Endothelial cell of umbilical vein (primary cell): ENCODE measurements at regions of chr10 and their contacts with region 1.

Region 1: DNA sequence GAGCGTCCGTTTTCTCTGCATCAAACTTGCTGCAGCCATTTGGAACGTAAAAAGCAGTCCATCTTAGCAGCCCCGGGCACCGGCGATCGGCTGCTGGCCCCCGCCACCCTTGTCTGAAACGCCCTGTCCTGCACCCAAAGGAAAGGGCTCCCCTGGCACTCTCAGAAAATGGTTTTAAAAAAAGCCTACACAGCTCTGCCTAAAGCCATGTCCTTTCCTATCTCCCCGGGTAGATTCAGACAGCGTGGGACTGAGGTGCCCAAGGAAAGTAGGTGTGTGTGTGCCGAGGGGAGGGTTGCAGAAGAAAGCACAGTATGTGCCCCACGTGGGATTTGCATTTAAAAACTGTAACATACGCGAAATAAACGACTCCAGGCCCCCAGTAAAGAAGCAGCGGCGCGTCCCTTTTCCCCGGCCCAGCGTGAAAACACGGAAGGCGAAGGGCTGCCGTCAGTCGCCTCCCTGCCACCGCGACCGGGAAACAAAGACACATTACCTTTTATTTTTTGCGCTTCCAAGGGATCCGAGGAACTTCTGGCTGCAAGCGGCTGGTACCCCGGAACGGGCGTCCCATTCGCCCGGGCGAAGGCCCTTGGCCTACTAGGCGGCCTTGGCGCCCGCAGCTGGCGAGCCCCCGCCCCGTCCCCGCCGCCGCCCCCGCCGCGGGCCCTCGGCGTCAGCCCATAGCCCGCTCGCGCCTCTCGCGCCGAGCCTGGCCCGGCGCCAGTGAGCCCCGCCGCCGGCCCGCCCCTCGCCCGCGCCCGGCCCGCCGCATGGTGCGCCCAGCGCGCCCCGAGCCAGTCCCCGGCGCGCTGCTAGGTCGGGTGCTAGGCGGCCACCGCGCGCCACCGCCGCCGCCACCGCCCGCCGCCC is 304.6 kb downstream of the PRPF18 start:
- DNase-seq: peak; percentile 56
- H3K4me3 ChIP-seq: peak overlapping the region; percentile 74 to 88 (median 78)
- H3K27ac ChIP-seq: peak overlapping the region; percentile 93
- H3K4me1 ChIP-seq: peaks cover 60% of the 10 kb centered on the region
- H3K27me3 ChIP-seq: no peaks in the 10 kb centered on the region
- CTCF ChIP-seq: no peak
- POLR2A ChIP-seq: peak; percentile 24

Region 2: DNA sequence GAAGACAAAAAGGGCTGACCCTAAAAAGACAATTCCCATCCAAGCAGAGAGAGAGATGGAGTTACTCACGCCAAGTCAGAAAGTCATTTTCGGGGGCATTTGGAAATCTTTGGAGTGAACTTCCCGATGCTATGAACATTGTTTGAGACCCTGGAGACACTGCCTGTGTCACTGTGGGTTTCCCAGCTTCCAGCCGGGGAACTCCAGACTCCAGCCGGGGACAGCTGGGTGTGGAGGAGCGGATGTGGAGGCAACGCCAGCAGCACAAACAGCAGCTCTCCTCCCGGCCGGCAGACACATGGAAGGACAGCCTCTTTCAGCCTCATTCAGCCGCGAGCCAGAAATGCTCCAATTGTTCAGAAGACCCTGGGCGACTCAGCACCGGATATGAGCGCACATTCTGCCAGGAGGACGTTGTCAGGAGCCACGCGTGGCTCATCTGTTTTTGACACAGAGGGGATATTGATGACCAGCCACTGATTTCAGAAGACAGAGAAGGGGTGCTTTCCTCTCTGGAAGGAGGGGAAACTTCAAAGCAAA is 207.0 kb before region 1 on chr10:
- CTCF ChIA-PET with region 1: no interaction called
- POLR2A ChIA-PET with region 1: no interaction called
- dilution Hi-C with region 1: no loop called
- intact Hi-C with region 1: loop called (anchors 2 kb)
- DNase-seq: peak; percentile 93
- H3K4me3 ChIP-seq: no peak overlapping the region
- H3K27ac ChIP-seq: peak overlapping the region; percentile 100
- H3K4me1 ChIP-seq: peaks cover 47% of the 10 kb centered on the region
- H3K27me3 ChIP-seq: no peaks in the 10 kb centered on the region
- CTCF ChIP-seq: no peak
- POLR2A ChIP-seq: no peak

Region 3: DNA sequence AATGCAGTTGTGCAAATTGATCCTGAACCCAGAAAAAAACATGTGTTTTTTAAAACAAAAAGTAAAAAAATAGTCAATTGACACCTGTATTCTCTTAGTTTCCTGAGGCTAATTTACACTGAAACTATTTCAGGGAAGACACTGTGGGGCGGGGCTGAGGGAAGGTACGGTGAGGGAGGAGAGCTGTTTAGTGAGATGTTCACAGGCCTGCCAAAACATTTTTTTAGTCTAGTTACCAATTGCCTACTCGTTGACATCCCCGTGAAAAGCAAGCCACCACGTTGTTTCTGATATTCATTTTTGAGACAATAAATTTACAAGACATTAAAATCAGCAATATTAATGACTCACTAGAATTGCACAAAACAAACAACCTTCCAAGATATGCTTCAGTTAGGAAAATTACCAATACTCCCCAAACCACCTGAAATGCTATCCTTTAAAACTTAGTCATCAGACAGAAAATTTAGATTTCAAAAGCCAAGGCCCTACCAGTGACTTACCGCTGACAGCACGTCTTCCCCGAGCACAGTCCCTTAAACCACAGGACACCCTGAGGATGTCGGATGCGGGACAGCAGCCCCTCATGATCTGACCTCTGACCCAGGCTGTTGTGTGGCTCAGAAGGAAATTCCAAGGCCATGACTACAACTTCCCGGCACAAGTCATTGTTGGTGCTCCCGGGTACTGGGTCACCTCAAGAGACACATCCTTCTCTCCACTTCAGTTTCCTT is 25.4 kb before region 1 on chr10:
- CTCF ChIA-PET with region 1: interaction called, 3 read pairs
- POLR2A ChIA-PET with region 1: no interaction called
- dilution Hi-C with region 1: no loop called
- intact Hi-C with region 1: loop called (anchors 1 kb)
- DNase-seq: peak; percentile 89
- H3K4me3 ChIP-seq: peak overlapping the region in 1 of 3 experiments; percentile 37
- H3K27ac ChIP-seq: peak overlapping the region; percentile 96
- H3K4me1 ChIP-seq: peaks cover 64% of the 10 kb centered on the region
- H3K27me3 ChIP-seq: no peaks in the 10 kb centered on the region
- CTCF ChIP-seq: no peak
- POLR2A ChIP-seq: no peak

Region 4: DNA sequence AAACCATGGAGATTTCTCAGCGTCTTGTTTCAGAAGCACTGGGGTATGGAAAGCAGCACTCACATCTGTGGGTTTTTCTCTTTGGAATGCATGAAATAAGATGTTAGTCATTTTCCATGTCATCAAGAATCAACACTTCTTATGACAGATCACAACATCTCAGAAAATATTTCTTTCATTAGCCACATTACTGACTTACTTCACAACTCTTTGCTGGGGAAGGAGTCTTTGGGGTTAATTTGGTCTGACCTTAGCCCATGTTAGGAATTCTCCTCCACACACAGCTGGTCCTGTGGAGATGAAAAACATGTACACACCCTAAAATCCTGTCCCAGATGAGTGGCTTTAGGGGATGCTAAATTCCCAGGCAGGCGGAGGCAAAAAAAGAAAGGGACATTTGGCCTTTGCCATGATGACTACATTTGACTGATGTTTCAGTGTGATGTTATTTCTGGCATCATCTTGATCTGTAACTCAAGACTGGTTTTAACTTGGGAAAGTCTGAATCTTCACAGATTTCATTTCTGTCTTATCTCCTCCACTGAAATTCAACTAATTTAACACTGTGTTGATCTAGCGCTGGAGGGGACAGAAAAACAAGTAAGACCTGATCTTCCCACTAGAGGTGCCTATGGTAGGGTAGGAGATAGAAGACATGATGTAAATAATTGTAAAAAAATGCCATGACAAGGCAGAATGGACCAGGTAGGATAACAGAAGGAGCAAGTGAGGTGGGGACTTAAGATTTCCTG is 58.7 kb after region 1 on chr10:
- CTCF ChIA-PET with region 1: interaction called, 5 read pairs
- POLR2A ChIA-PET with region 1: no interaction called
- dilution Hi-C with region 1: no loop called
- intact Hi-C with region 1: loop called (anchors 1 kb)
- DNase-seq: peak; percentile 22
- H3K4me3 ChIP-seq: no peak overlapping the region
- H3K27ac ChIP-seq: no peak overlapping the region
- H3K4me1 ChIP-seq: peaks cover 33% of the 10 kb centered on the region
- H3K27me3 ChIP-seq: no peaks in the 10 kb centered on the region
- CTCF ChIP-seq: no peak
- POLR2A ChIP-seq: no peak

Region 5: GRCh38 chr10:14009371-14010100 is 118.2 kb after region 1 on chr10:
- CTCF ChIA-PET with region 1: interaction called, 3 read pairs
- POLR2A ChIA-PET with region 1: no interaction called
- dilution Hi-C with region 1: no loop called
- intact Hi-C with region 1: loop called (anchors 2 kb)
- DNase-seq: peak; percentile 47
- H3K4me3 ChIP-seq: peak overlapping the region; percentile 1 to 79 (median 26)
- H3K27ac ChIP-seq: peak overlapping the region; percentile 93
- H3K4me1 ChIP-seq: peaks cover 39% of the 10 kb centered on the region
- H3K27me3 ChIP-seq: no peaks in the 10 kb centered on the region
- CTCF ChIP-seq: no peak
- POLR2A ChIP-seq: no peak

Region 6: GRCh38 chr10:14093730-14094484 is 202.5 kb after region 1 on chr10:
- CTCF ChIA-PET with region 1: interaction called, 13 read pairs
- POLR2A ChIA-PET with region 1: no interaction called
- dilution Hi-C with region 1: no loop called
- intact Hi-C with region 1: loop called (anchors 1 kb)
- DNase-seq: peak; percentile 68
- H3K4me3 ChIP-seq: no peak overlapping the region
- H3K27ac ChIP-seq: no peak overlapping the region
- H3K4me1 ChIP-seq: peaks cover 6% of the 10 kb centered on the region
- H3K27me3 ChIP-seq: no peaks in the 10 kb centered on the region
- CTCF ChIP-seq: peak; percentile 41 to 45
- POLR2A ChIP-seq: no peak

Region 7: GRCh38 chr10:14220026-14220425 is 328.7 kb after region 1 on chr10:
- CTCF ChIA-PET with region 1: no interaction called
- POLR2A ChIA-PET with region 1: no interaction called
- dilution Hi-C with region 1: no loop called
- intact Hi-C with region 1: no loop called
- DNase-seq: no peak
- H3K4me3 ChIP-seq: no peak overlapping the region
- H3K27ac ChIP-seq: no peak overlapping the region
- H3K4me1 ChIP-seq: no peaks in the 10 kb centered on the region
- H3K27me3 ChIP-seq: peaks cover 2 to 8% of the 10 kb centered on the region in 2 experiments
- CTCF ChIP-seq: no peak
- POLR2A ChIP-seq: no peak